ENCODE measurements at regions of chr2 and their contacts with region 1.

Region 1: DNA sequence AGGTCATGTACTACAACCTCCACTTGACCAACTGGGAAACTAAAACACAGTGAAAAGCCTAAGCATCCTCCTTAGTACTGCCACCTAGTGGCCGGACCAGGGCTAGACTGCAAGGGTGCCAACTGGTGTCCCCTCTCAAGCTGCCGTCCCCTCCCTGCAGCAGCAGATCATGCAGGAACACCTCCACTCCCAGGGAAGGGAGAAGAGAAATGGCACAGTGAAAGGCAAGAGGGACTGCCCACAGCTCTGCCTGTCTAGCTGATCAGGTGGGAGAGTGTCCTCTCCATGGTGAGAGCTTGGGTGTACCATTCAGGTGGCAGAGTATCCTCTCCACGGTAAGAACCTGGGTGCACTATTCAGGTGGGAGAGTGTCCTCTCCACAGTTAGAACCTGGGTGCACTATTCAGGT is 78.1 kb downstream of the AAK1 start:
- DNase-seq: peak; percentile 43 to 73 (median 58)
- H3K4me3 ChIP-seq: no peak overlapping the region
- H3K4me3 Mint-ChIP-seq: peak overlapping the region in 6 of 7 donors; percentile 41 to 62 (median 56)
- H3K27ac ChIP-seq: no peak overlapping the region
- H3K27ac Mint-ChIP-seq: peak overlapping the region; percentile 74 to 95 (median 88)
- H3K4me1 ChIP-seq: peaks cover 75% of the 10 kb centered on the region
- H3K4me1 Mint-ChIP-seq: peaks cover 89 to 95% (median 91%) of the 10 kb centered on the region in 3 donors
- H3K27me3 ChIP-seq: no peaks in the 10 kb centered on the region
- H3K27me3 Mint-ChIP-seq: no peaks in the 10 kb centered on the region

Region 2: DNA sequence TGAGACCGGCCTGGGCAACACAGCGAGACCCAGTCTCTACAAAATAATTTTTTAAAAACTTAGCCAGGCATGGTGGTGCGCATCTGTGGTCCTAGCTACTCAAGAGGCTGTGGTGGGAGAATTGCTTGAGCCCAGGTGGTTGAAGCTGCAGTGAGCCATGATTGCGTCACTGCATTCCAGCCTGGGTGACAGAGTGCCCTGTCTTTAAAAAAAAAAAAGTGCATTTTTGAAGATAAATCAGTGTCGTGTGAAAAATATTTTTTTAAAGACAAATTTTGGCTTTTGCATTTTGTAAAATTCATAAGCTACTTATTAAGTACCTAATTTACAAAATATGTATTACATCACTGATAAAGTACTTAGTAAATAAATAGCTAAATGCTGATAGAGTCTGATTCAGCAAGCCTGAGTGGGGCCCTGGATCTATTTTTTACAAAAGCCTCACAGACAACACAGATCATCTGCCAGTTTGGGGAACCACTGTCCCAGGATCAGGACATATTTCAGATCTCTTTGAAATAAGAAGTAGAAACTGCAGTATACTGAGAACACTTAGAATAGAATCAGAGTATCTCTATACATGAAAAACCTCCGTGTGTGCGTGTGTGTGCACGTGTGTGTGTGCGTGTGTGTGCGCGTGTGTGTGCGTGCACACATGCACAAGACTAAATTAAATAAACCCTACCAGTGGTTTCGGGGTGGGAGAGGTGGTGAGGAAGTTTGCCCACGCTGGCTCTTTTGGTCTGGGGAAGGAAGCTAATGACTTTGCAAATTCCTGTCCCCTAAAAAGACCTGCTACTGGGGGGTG is 16.5 kb after region 1 on chr2:
- CTCF ChIA-PET with region 1: interaction called, 59 read pairs
- POLR2A ChIA-PET with region 1: interaction called, 3 read pairs
- DNase-seq: peak in 1 of 5 donors; percentile 22
- H3K4me3 ChIP-seq: no peak overlapping the region
- H3K4me3 Mint-ChIP-seq: peak overlapping the region; percentile 4 to 81 (median 73)
- H3K27ac ChIP-seq: no peak overlapping the region
- H3K27ac Mint-ChIP-seq: peak overlapping the region; percentile 48 to 91 (median 78)
- H3K4me1 ChIP-seq: peaks cover 95% of the 10 kb centered on the region
- H3K4me1 Mint-ChIP-seq: peaks cover 89 to 96% (median 96%) of the 10 kb centered on the region in 3 donors
- H3K27me3 ChIP-seq: no peaks in the 10 kb centered on the region
- H3K27me3 Mint-ChIP-seq: no peaks in the 10 kb centered on the region

Region 3: GRCh38 chr2:69652221-69652651 is 86.8 kb after region 1 on chr2:
- CTCF ChIA-PET with region 1: interaction called, 25 read pairs
- POLR2A ChIA-PET with region 1: no interaction called
- DNase-seq: no peak
- H3K4me3 ChIP-seq: no peak overlapping the region
- H3K4me3 Mint-ChIP-seq: peak overlapping the region in 6 of 7 donors; percentile 30 to 70 (median 52)
- H3K27ac ChIP-seq: no peak overlapping the region
- H3K27ac Mint-ChIP-seq: peak overlapping the region in 5 of 8 donors; percentile 24 to 72 (median 64)
- H3K4me1 ChIP-seq: peaks cover 42% of the 10 kb centered on the region
- H3K4me1 Mint-ChIP-seq: peaks cover 40 to 58% (median 50%) of the 10 kb centered on the region in 3 donors
- H3K27me3 ChIP-seq: no peaks in the 10 kb centered on the region
- H3K27me3 Mint-ChIP-seq: no peaks in the 10 kb centered on the region

Region 4: DNA sequence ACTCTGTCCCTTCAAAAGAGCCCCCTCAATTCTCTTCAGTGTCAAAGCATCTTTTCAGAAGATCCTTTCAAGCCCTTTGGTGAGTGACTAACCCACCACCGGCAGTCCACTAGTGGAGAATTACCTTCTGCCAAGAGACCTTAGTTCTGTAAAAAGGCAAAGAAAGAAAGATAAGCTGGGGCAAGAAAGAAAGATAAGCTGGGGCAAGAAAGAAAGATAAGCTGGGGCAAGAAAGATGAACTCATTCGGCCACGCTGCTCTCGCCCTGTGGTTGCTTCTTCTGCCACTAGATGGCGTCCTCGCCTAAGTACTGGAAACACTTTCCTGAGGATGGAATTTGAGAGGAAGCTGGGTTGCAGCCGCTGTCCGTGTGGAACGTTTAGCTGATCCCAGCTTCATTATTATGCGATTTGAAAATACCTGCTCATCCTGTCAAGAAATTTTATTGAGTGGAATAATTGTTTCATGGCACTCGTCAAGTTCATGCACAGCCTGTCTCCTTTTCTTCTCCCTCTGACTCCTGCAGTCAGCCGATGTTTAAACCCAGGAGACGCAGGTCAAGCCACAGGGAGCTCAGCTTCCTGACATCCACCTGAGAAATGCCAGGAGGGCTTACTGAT is 159.2 kb after region 1 on chr2:
- CTCF ChIA-PET with region 1: interaction called, 25 read pairs
- POLR2A ChIA-PET with region 1: no interaction called
- DNase-seq: peak; percentile 71 to 86 (median 77)
- H3K4me3 ChIP-seq: peak overlapping the region; percentile 38
- H3K4me3 Mint-ChIP-seq: peak overlapping the region in 6 of 7 donors; percentile 39 to 74 (median 58)
- H3K27ac ChIP-seq: no peak overlapping the region
- H3K27ac Mint-ChIP-seq: peak overlapping the region in 2 of 8 donors; percentile 33 to 79
- H3K4me1 ChIP-seq: peaks cover 6% of the 10 kb centered on the region
- H3K4me1 Mint-ChIP-seq: peaks cover 4 to 7% (median 7%) of the 10 kb centered on the region in 3 donors
- H3K27me3 ChIP-seq: no peaks in the 10 kb centered on the region
- H3K27me3 Mint-ChIP-seq: peaks cover 0 to 3% of the 10 kb centered on the region in 2 donors

Region 5: DNA sequence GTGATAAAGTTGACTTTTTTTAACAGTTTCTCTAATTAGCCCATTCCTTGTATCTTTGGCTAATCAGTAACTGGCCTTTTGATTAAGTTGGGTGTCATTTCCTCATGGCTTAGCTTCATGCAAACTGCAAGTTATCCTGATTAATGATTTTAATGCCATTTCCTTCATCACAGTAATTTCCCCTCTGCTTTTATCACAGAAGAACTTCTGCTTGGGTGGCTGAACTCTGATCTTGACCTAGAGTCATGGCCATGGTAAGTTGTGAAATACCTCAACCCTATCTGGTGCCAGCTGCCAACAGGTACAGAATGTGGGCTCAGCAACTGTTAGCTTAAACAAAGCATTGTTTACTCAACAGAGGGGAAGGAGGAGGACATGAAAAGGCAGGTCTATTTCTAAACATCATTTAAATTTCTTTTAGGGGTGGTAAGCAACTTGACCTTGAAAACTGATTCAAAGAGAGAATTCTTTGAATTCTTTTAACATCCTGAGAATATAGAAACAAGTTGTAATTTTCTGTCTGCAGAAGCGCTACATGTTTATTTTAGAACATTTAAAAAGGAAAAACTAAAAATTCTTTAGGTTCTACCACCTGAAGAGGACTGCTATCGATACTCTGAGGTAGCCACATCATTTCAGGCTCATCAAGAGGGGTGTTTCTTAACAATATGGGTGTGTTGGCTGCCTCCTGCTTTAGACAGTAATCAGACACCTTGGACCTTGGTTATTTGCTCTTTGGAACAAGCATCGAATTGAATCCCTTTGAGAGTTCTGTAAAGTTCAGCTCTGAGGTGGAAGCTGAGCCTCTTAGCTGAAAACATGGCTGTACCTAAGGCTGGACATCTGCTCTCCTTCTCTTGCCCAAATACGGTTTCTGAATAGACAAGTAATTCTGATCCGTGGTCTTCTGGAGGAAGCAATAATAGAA is 216.2 kb after region 1 on chr2:
- CTCF ChIA-PET with region 1: no interaction called
- POLR2A ChIA-PET with region 1: no interaction called
- DNase-seq: no peak
- H3K4me3 ChIP-seq: no peak overlapping the region
- H3K4me3 Mint-ChIP-seq: no peak overlapping the region
- H3K27ac ChIP-seq: no peak overlapping the region
- H3K27ac Mint-ChIP-seq: peak overlapping the region in 2 of 8 donors; percentile 23 to 25
- H3K4me1 ChIP-seq: no peaks in the 10 kb centered on the region
- H3K4me1 Mint-ChIP-seq: peaks cover 1 to 3% (median 2%) of the 10 kb centered on the region in 3 donors
- H3K27me3 ChIP-seq: no peaks in the 10 kb centered on the region
- H3K27me3 Mint-ChIP-seq: no peaks in the 10 kb centered on the region

Measured in CD8-positive, alpha-beta memory T cell (primary cell).